ENCODE measurements at regions of chr4 and their contacts with region 1.

Region 1: GRCh38 chr4:122584519-122584918 is 36.3 kb downstream of the IL21 start:
- DNase-seq: peak; percentile 38
- H3K4me3 Mint-ChIP-seq: peak overlapping the region; percentile 62
- H3K27ac Mint-ChIP-seq: peak overlapping the region; percentile 94
- H3K4me1 Mint-ChIP-seq: peaks cover 70% of the 10 kb centered on the region
- H3K27me3 Mint-ChIP-seq: peaks cover 3% of the 10 kb centered on the region

Region 2: GRCh38 chr4:122542411-122543236 is 41.9 kb before region 1 on chr4:
- intact Hi-C with region 1: loop called (anchors 1 kb)
- DNase-seq: no peak
- H3K4me3 Mint-ChIP-seq: peak overlapping the region; percentile 71
- H3K27ac Mint-ChIP-seq: peak overlapping the region; percentile 93
- H3K4me1 Mint-ChIP-seq: peaks cover 85% of the 10 kb centered on the region
- H3K27me3 Mint-ChIP-seq: no peaks in the 10 kb centered on the region

Region 3: GRCh38 chr4:122716825-122717448 is 132.4 kb after region 1 on chr4:
- intact Hi-C with region 1: loop called (anchors 1 kb)
- DNase-seq: peak; percentile 55
- H3K4me3 Mint-ChIP-seq: peak overlapping the region; percentile 25
- H3K27ac Mint-ChIP-seq: peak overlapping the region; percentile 81
- H3K4me1 Mint-ChIP-seq: peaks cover 46% of the 10 kb centered on the region
- H3K27me3 Mint-ChIP-seq: peaks cover 2% of the 10 kb centered on the region

Region 4: DNA sequence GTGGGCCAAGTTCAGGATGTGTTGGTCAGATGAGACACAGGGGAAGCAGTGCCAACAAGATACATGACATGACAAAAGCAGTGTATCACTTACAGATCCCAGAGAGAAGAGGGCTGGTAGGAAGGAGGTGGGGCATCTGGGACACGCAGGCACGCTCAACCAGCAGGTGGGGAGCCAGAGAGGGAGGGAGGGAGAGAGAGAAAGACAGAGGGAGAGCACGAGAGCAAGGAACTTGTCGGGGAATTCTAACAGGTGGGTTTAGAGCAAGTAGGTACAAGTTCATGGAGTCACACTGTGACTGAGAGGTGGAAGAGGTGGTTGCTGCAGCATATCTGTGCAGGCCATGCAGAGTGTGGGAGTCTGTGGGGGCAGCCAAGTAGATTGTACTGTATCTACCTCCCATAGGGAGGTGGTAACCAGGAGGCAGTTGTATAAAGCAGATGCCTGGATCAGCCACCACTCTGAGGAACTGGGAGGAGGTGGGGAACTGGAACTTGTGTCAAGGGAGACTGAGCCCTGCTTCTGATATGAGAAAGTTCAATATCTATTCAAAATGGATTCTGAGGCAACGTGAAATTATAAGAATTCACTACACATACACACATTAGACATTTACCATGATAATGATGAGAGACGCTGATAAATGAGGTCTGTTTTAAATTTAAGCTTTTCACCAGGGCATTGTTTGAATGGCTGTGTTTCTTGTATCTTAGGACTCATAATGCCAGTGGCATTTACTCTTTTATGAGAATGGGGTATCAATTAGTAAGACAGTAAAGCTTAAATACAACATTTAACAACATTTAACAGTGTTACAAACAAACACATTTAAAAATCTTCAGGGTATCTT is 191.7 kb after region 1 on chr4:
- intact Hi-C with region 1: no loop called
- DNase-seq: no peak
- H3K4me3 Mint-ChIP-seq: no peak overlapping the region
- H3K27ac Mint-ChIP-seq: no peak overlapping the region
- H3K4me1 Mint-ChIP-seq: no peaks in the 10 kb centered on the region
- H3K27me3 Mint-ChIP-seq: peaks cover 6% of the 10 kb centered on the region